ENCODE measurements at regions of chr9 and their contacts with region 1.

Region 1: GRCh38 chr9:25377039-25377438 is 301.2 kb downstream of the TUSC1 start:
- DNase-seq: no peak
- ATAC-seq: no peak
- H3K4me3 ChIP-seq: no peak overlapping the region
- H3K27ac ChIP-seq: no peak overlapping the region
- H3K4me1 ChIP-seq: no peaks in the 10 kb centered on the region
- H3K27me3 ChIP-seq: peaks cover 0 to 3% (median 0%) of the 10 kb centered on the region in 9 donors
- CTCF ChIP-seq: no peak
- POLR2A ChIP-seq: no peak

Region 2: DNA sequence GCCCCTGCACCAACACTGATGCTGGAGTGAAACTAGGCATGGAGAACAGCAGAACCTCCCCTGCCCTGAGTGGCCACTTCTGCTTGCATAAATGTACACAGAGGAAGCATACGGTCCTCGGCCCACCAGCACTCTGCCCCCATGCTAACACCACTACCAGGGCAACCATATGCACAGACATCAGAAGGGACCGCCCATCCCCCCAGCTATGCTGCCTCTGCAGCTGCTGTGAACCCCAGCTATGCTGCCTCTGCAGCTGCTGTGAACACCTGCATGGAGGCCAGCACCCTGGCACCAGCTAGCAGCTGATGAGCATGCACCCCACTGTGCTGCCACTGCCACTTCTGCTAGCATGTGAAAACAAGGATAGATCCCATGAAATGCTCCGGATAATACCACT is 50.9 kb after region 1 on chr9:
- intact Hi-C with region 1: loop called in 1 of 10 experiments (anchors 10 kb)
- DNase-seq: no peak
- ATAC-seq: no peak
- H3K4me3 ChIP-seq: no peak overlapping the region
- H3K27ac ChIP-seq: no peak overlapping the region
- H3K4me1 ChIP-seq: no peaks in the 10 kb centered on the region
- H3K27me3 ChIP-seq: no peaks in the 10 kb centered on the region
- CTCF ChIP-seq: no peak
- POLR2A ChIP-seq: no peak